ENCODE measurements at regions of chr15 and their contacts with region 1.

Region 1: GRCh38 chr15:84981054-84981710 is 474 bp upstream of the PDE8A start:
- DNase-seq: peak; percentile 96
- H3K4me3 Mint-ChIP-seq: peak overlapping the region; percentile 88
- H3K27ac Mint-ChIP-seq: peak overlapping the region; percentile 91
- H3K4me1 Mint-ChIP-seq: peaks cover 38% of the 10 kb centered on the region
- H3K27me3 Mint-ChIP-seq: peaks cover 6% of the 10 kb centered on the region

Region 2: GRCh38 chr15:84600851-84601838 is 380.0 kb before region 1 on chr15 and contains the start of gene ZSCAN2:
- intact Hi-C with region 1: loop called (anchors 2 kb)
- DNase-seq: peak; percentile 92
- H3K4me3 Mint-ChIP-seq: peak within 1 kb of the TSS; percentile 90
- H3K27ac Mint-ChIP-seq: peak within 1 kb of the TSS; percentile 73
- H3K4me1 Mint-ChIP-seq: peaks cover 48% of the 10 kb centered on the region
- H3K27me3 Mint-ChIP-seq: no peaks in the 10 kb centered on the region
- total RNA-seq, gene ZSCAN2: 10.1 and 10.6 TPM in 2 replicates

Region 3: GRCh38 chr15:84734794-84735479 is 246.2 kb before region 1 on chr15:
- intact Hi-C with region 1: loop called (anchors 5 kb)
- DNase-seq: peak; percentile 72
- H3K4me3 Mint-ChIP-seq: peak overlapping the region; percentile 59
- H3K27ac Mint-ChIP-seq: peak overlapping the region; percentile 95
- H3K4me1 Mint-ChIP-seq: peaks cover 40% of the 10 kb centered on the region
- H3K27me3 Mint-ChIP-seq: no peaks in the 10 kb centered on the region

Region 4: DNA sequence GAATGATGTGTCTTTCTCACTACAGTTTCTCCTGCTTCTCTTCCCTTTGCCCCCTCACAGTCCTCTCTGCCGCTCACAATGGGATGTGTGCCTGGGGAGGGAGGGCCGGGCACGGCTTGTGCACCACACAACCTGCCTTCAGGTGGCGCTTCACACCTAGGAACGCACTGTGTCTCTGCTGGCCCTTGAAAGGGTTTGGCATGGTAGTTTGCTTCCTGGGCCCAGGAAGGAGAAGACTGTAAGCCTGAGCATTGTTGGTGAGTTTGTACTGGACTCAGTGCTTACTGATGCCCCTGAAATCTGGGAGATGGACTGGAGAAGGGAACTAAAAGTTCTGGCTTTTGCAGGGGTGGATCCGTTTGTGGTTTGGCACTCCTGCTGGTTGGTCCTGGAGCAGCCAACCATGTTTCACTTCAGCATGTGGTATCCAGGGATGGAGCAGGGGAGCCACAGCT is 154.8 kb before region 1 on chr15:
- intact Hi-C with region 1: no loop called
- DNase-seq: no peak
- H3K4me3 Mint-ChIP-seq: no peak overlapping the region
- H3K27ac Mint-ChIP-seq: no peak overlapping the region
- H3K4me1 Mint-ChIP-seq: no peaks in the 10 kb centered on the region
- H3K27me3 Mint-ChIP-seq: peaks cover 13% of the 10 kb centered on the region

Region 5: GRCh38 chr15:84840741-84841429 is 140.3 kb before region 1 on chr15:
- intact Hi-C with region 1: no loop called
- DNase-seq: no peak
- H3K4me3 Mint-ChIP-seq: no peak overlapping the region
- H3K27ac Mint-ChIP-seq: no peak overlapping the region
- H3K4me1 Mint-ChIP-seq: no peaks in the 10 kb centered on the region
- H3K27me3 Mint-ChIP-seq: peaks cover 3% of the 10 kb centered on the region

Region 6: GRCh38 chr15:84961114-84961452 is 20.1 kb before region 1 on chr15:
- intact Hi-C with region 1: no loop called
- DNase-seq: no peak
- H3K4me3 Mint-ChIP-seq: no peak overlapping the region
- H3K27ac Mint-ChIP-seq: no peak overlapping the region
- H3K4me1 Mint-ChIP-seq: peaks cover 4% of the 10 kb centered on the region
- H3K27me3 Mint-ChIP-seq: peaks cover 18% of the 10 kb centered on the region

Region 7: DNA sequence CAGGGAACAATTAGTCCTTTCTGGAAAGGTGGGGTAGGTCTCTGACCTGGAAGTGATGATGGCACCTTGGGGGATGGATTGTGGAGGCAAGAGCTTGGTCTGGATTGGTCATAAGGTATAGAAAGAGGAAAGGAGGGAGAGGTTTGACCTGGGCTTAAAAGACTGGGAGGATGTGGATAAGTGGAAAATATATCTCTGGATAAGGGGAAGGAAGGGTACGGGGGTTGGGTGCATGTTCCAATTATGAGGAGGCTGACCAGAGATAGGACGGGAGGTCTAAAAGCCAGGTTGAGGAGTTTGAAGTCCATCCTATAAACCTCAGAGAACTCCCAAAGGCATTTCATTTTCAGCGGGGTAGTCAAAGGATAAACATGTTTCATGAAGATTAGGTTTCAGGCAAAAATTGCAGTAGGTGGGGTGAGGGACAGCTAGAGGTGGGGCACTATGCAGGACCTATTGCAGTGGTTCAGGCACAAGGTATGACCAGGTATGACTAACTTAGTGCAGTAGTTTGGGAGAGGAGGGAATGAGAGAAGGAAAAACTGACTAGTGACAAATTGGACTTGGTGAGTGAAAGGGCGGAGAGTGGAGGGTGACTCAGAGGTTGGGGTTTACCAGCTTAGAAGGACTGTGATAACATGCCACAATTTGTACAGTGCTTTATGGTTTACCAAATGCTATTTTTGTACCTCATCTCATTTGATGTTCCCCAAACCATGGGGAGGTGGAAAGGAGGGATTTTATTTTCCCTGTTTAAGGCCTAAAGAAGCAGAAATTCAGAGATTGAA is 11.2 kb after region 1 on chr15:
- intact Hi-C with region 1: loop called (anchors 1 kb)
- DNase-seq: no peak
- H3K4me3 Mint-ChIP-seq: no peak overlapping the region
- H3K27ac Mint-ChIP-seq: peak overlapping the region; percentile 43
- H3K4me1 Mint-ChIP-seq: peaks cover 41% of the 10 kb centered on the region
- H3K27me3 Mint-ChIP-seq: no peaks in the 10 kb centered on the region

Region 8: DNA sequence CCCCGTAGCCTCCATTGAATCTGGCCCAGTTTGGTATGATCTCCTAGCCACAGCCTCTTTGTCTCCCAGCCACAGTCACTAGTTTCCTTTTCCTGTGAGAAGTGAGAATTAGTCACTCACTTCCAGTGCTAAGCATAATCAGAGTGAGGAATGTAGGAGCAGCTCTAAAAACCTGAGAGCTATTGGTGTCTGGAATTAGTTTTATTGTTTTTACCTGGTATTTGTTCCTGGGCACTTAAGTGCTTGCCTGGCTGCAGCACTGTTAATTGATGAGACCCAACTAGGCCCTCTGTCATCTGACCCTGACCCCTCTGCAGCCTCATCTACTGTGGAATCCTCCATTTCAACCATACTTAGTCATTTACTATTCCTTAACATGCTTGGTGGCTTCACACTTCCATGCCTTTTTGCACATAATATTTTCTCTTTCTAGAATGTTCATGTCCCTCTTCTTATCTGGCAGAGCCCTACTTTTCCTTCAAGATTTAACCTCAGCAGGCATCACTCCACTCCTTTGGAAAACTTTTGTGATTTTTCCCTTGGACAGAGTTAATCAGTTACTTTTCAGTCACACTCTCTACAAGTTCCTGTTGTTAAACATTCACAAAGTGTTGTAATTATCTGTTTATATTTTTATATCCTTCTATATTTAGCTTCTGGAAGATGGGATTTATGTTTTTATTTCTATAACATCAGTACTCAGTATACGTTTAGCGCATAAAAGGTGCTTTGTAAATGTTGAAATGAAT is 49.3 kb after region 1 on chr15:
- intact Hi-C with region 1: loop called (anchors 5 kb)
- DNase-seq: no peak
- H3K4me3 Mint-ChIP-seq: no peak overlapping the region
- H3K27ac Mint-ChIP-seq: no peak overlapping the region
- H3K4me1 Mint-ChIP-seq: peaks cover 38% of the 10 kb centered on the region
- H3K27me3 Mint-ChIP-seq: no peaks in the 10 kb centered on the region

Region 9: DNA sequence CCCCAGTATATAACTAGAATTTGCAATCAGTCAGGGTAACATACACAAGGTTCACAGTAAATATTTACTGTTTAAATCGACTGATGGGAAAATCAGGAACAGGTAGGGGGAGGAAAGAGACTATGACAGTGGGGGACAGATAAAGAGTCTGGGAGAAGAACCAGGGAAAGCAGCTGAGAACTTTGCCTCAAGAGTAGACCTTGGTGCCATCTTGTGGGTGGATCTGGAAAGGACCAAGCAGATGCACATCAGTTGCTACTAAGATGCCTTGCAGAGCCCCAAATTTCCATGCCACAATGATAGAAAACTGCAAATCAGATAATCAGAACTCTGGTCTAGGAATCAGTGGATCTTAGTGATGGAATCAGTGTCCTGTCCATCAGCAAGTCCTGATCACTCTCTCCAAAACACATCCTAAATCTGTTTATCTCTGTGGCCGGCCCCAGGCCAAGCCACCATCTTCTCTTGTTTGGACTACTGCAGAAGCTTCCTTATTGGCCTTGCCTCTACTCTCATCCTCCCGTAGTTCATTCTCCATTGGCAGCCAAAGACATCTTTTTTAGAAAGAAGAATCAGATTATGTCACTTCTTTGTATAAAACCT is 63.2 kb after region 1 on chr15:
- intact Hi-C with region 1: loop called (anchors 1 kb)
- DNase-seq: no peak
- H3K4me3 Mint-ChIP-seq: no peak overlapping the region
- H3K27ac Mint-ChIP-seq: no peak overlapping the region
- H3K4me1 Mint-ChIP-seq: peaks cover 6% of the 10 kb centered on the region
- H3K27me3 Mint-ChIP-seq: no peaks in the 10 kb centered on the region

Region 10: GRCh38 chr15:85073556-85074194 is 92.5 kb after region 1 on chr15:
- intact Hi-C with region 1: loop called (anchors 2 kb)
- DNase-seq: no peak
- H3K4me3 Mint-ChIP-seq: no peak overlapping the region
- H3K27ac Mint-ChIP-seq: peak overlapping the region; percentile 78
- H3K4me1 Mint-ChIP-seq: peaks cover 10% of the 10 kb centered on the region
- H3K27me3 Mint-ChIP-seq: no peaks in the 10 kb centered on the region

Measured in activated T-helper 2 cell treated with anti-CD3 and anti-CD28 coated beads, Interferon-gamma antibody, Interleukin-2, Interleukin-4, amounts not matched to agents 10 μg/mL and 5 μg/mL and 100 μg/mL, durations not matched to agents 14 hours and 24 hours and 36 hours (primary cell).